ENCODE measurements at regions of chr5 and their contacts with region 1.

Region 1: DNA sequence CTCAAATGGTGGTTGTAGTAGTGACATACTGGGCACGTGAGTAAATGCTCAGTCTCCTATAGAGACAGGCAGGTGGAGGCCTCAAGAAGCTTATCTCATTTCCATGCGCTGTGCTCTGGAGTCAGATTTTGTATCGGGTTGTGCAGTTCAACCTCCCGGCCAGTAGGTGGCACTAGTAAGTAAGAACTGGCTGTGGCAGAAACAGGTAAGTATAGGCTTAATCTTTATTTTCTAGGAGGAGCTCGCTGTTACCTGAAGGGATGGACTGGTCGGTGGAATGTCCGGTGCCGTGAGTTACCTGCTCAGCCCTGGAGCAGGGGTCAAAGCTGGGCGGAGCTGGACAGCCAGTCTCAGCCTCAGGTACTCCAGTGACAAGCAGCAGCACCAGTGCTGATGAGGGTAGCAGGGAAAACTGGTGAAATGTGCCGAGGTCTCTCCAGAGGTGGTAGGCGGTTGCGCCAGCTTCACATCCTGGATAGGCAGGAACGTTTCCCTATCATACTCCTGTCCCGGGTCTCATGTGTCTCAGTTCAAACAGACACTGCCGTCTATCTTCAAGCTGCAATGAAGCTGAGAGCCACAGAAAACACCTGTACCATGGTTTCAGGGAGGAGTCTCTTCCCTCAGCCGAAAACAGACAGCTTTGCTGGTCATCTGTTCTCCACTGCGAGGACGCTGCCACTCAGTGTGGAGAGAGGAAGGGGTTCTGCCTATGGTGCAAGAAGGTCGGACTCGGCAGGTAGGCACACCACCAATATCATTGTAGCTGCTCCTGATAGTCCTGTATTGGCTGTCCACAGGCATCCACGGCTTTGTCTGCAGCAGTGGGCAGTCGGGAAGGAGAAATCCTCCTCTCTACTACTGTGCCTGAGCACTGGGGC is 880.3 kb upstream of the SEMA6A start:
- DNase-seq: peak; percentile 57
- H3K4me3 ChIP-seq: peak overlapping the region; percentile 53
- H3K27ac ChIP-seq: no peak overlapping the region
- H3K4me1 ChIP-seq: no peaks in the 10 kb centered on the region
- CTCF ChIP-seq: peak; percentile 92

Region 2: DNA sequence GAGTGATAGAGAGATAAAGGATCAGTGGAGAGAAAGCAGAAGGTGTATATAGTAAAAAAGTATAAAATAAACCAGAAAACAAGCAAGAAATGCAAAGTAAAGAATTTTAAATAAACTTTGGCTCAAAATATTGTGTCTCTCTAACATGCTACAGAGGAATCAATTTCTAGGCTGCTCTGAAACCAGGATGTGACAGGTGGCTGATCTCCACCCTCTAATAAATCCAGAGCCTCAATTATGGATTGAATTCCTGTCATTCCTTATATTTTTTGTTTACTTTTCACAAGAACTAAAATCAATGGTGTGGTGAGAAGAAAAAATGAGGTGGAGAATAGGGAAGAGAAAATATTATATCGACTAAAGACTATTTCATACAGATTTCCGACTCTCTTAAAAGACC is 84.7 kb after region 1 on chr5:
- CTCF ChIA-PET with region 1: no interaction called
- POLR2A ChIA-PET with region 1: no interaction called
- intact Hi-C with region 1: no loop called
- DNase-seq: no peak
- H3K4me3 ChIP-seq: no peak overlapping the region
- H3K27ac ChIP-seq: no peak overlapping the region
- H3K4me1 ChIP-seq: no peaks in the 10 kb centered on the region
- CTCF ChIP-seq: no peak

Region 3: DNA sequence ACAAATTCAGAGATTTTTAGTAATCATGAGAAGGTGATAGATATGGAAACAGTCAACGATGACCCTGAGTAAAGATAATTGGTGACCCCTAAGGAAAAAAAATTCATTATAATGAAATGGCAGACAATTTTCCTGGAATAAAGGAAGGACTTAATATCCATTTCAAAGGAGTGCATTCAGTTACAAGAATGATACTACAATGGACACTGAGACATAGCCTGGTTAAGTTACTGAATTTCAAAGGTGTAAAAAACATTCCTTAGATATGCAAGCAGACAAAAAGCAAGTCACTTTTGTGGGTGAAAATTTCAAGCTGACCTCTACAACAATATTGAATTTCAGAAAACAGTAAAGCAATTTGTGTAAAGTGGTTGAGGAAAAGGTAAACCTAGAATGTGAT is 132.2 kb after region 1 on chr5:
- CTCF ChIA-PET with region 1: no interaction called
- POLR2A ChIA-PET with region 1: no interaction called
- intact Hi-C with region 1: no loop called
- DNase-seq: no peak
- H3K4me3 ChIP-seq: no peak overlapping the region
- H3K27ac ChIP-seq: no peak overlapping the region
- H3K4me1 ChIP-seq: no peaks in the 10 kb centered on the region
- CTCF ChIP-seq: no peak

Region 4: DNA sequence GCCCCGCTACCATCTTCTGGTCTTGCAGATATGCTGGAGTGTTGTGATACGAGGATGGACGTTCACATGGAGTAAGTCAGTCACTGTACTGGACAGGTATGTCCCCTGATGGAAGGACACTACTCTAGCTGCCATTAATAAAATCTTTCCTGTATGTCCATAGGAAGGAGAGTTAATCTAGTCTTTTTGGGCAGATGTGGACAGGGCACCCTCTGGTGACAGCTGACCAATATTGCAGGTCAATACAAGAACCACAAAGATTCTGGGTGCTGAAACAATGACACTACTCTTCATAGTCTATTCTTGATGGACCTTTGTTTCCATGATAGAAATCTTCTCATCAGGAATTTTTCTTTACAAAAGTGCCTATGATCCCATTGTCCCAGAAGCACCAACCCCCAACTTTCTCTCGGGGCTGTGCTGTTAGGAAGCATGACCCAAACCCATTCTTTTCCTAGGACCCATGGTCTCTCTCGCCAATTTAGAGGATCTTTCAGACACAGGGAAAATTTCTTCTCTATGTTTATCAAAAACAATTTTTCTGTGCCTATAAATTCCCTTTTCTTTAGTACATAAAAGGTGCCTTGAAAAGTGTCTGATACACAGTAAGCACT is 1156.5 kb after region 1 on chr5:
- CTCF ChIA-PET with region 1: no interaction called
- POLR2A ChIA-PET with region 1: no interaction called
- intact Hi-C with region 1: loop called (anchors 10 kb)
- DNase-seq: peak; percentile 17
- H3K4me3 ChIP-seq: no peak overlapping the region
- H3K27ac ChIP-seq: no peak overlapping the region
- H3K4me1 ChIP-seq: no peaks in the 10 kb centered on the region
- CTCF ChIP-seq: peak; percentile 81

Measured in OCI-LY7 (cell line).